H1 (cell line): ENCODE measurements at regions of chr3 and their contacts with region 1.

Region 1: GRCh38 chr3:181326637-181327223 is 337.2 kb upstream of the DNAJC19 start:
- DNase-seq: no peak
- H3K4me3 ChIP-seq: no peak overlapping the region
- H3K27ac ChIP-seq: no peak overlapping the region
- H3K4me1 ChIP-seq: peaks cover 0 to 2% (median 0%) of the 10 kb centered on the region in 4 experiments; a peak in 2 of 7 replicates
- H3K27me3 ChIP-seq: no peaks in the 10 kb centered on the region
- CTCF ChIP-seq: peak in 2 of 3 experiments; percentile 55 to 66; a peak in 2 of 4 replicates
- EP300 ChIP-seq: no peak
- POLR2A ChIP-seq: no peak
- RAD21 ChIP-seq: peak; percentile 71 to 79

Region 2: DNA sequence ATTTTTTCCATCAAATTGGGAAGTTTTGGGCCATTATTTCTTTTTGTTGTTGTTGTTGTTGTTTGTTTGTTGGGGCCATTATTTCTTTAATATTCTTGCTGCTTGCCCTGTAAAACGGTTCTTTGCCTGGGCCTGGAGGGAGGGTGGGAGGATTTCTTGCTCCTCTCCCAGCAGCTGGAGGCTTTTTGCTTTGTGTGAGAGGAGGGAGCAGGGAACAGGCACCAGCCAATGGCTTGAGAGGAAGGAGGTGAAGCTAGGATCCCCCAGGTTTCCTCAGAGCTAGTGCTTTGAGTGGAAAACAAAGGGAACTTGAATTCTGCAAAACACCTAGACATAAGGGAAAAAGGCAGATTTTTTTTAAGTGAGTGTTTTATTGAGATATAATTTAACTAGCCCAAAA is 276.0 kb before region 1 on chr3:
- CTCF ChIA-PET with region 1: no interaction called
- POLR2A ChIA-PET with region 1: no interaction called
- DNase-seq: no peak
- H3K4me3 ChIP-seq: no peak overlapping the region
- H3K27ac ChIP-seq: no peak overlapping the region
- H3K4me1 ChIP-seq: no peaks in the 10 kb centered on the region
- H3K27me3 ChIP-seq: no peaks in the 10 kb centered on the region
- CTCF ChIP-seq: no peak
- EP300 ChIP-seq: no peak
- POLR2A ChIP-seq: no peak
- RAD21 ChIP-seq: no peak

Region 3: DNA sequence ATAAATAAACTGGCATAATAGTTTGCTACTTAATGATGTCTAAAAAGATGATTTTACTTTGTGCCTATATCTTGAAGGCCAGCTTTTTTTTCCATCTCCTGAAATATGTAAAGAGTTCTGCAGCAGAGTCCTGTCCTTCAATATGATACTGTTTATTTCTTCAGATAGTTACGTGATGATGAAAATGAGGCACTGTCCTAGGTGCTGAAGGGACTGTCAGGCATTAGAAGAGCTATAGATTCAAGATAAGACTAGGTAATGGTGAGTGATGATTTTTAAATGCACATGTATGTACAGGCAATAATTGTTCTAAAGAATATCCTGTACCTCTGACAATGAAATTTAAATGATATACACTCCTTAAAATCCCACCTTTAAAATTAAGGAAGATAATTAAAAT is 10.2 kb before region 1 on chr3:
- CTCF ChIA-PET with region 1: interaction called, 18 read pairs
- POLR2A ChIA-PET with region 1: no interaction called
- DNase-seq: no peak
- H3K4me3 ChIP-seq: no peak overlapping the region
- H3K27ac ChIP-seq: no peak overlapping the region
- H3K4me1 ChIP-seq: no peaks in the 10 kb centered on the region
- H3K27me3 ChIP-seq: no peaks in the 10 kb centered on the region
- CTCF ChIP-seq: no peak
- EP300 ChIP-seq: no peak
- POLR2A ChIP-seq: no peak
- RAD21 ChIP-seq: no peak